ENCODE measurements at regions of chr2 and their contacts with region 1.

Region 1: DNA sequence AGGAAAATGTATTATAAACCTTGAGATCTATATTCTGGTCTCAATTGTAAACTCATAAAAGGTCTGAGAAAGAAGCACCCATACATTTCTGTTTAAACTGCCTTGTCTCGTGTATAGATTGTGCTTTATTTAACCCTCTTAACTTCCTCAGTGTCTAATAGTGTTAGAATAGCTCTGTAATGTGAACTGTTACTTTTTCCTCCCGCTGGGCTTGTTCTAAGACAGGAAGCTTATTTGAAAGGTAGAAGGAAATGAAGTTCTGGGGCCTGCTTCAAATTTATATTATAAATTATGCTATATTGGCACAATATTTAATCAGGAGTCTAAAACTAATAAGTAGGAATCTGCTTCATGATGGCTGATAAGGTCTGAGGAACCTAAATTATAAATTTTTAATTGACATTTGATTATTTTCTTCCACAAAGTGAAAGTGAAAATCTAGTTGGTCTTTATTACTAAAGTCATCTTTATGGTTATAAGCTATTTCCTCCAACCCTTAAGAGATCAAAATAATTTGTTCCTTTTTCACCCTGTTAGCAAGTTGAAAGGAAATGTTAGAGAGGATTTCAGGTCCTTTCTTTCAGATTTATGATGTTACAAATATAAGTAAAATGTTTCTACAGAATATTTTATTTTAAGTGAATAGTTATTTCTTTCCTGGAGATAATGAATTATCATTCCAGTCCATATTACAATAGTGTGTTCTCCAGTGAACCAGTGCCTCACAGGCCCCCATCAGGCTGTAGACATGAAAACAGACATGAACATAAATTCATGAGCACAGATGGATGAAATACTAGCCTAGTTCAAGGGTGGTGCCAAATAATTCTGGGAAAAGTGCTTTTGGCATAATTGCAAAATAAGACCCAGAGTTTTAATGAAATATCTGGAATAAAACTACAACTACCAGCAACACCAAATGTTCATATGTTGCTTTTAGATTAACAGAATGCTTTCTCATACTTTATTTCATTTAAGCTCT is 7.9 kb downstream of the MFSD6 start:
- DNase-seq: peak in 1 of 9 experiments; percentile 43
- ATAC-seq: peak; percentile 62
- H3K4me3 ChIP-seq: peak overlapping the region in 1 of 2 experiments; percentile 6
- H3K4me3 Mint-ChIP-seq: peak overlapping the region; percentile 64
- H3K27ac ChIP-seq: peak overlapping the region; percentile 32 to 76
- H3K27ac Mint-ChIP-seq: peak overlapping the region; percentile 86
- H3K4me1 ChIP-seq: peaks cover 92% of the 10 kb centered on the region
- H3K4me1 Mint-ChIP-seq: peaks cover 89% of the 10 kb centered on the region
- H3K27me3 ChIP-seq: no peaks in the 10 kb centered on the region
- H3K27me3 Mint-ChIP-seq: no peaks in the 10 kb centered on the region
- CTCF ChIP-seq: no peak

Region 2: GRCh38 chr2:190376591-190377245 is 39.4 kb before region 1 on chr2:
- CTCF ChIA-PET with region 1: no interaction called
- POLR2A ChIA-PET with region 1: no interaction called
- intact Hi-C with region 1: no loop called
- DNase-seq: no peak
- ATAC-seq: no peak
- H3K4me3 ChIP-seq: no peak overlapping the region
- H3K4me3 Mint-ChIP-seq: no peak overlapping the region
- H3K27ac ChIP-seq: no peak overlapping the region
- H3K27ac Mint-ChIP-seq: no peak overlapping the region
- H3K4me1 ChIP-seq: no peaks in the 10 kb centered on the region
- H3K4me1 Mint-ChIP-seq: no peaks in the 10 kb centered on the region
- H3K27me3 ChIP-seq: peaks cover 0 to 2% of the 10 kb centered on the region in 2 experiments
- H3K27me3 Mint-ChIP-seq: no peaks in the 10 kb centered on the region
- CTCF ChIP-seq: no peak

Region 3: DNA sequence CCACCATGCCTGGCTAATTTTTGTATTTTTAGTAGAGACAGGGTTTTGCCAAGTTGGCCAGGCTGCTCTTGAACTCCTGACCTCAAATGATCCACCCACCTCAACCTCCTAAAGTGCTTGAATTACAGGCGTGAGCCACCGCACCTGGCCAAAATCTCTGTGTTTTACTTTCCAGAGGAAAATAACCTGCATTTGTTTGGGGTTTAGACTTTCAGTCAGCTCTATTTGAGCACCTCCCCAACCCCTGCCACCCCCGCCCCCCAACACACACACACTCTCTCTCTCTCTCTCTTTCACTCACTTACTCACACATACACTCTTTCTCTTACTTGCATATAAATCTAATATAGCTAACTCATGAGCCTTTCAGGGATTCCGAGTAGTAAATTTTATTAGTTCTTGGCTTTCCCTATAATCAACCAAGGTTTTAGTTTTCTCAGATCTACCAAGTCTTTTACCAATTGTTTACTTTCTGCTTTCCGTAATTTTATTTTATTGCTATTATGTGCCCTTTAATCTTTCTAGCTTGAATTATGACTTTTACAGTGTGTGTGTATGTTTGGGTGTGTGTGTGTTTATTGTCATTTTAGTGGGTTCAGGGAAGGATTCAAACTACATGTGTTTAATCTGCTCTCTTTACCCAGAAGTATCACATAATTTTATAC is 16.6 kb after region 1 on chr2:
- CTCF ChIA-PET with region 1: no interaction called
- POLR2A ChIA-PET with region 1: no interaction called
- intact Hi-C with region 1: loop called (anchors 1 to 2 kb)
- DNase-seq: no peak
- ATAC-seq: no peak
- H3K4me3 ChIP-seq: no peak overlapping the region
- H3K4me3 Mint-ChIP-seq: no peak overlapping the region
- H3K27ac ChIP-seq: no peak overlapping the region
- H3K27ac Mint-ChIP-seq: peak overlapping the region; percentile 16
- H3K4me1 ChIP-seq: peaks cover 23% of the 10 kb centered on the region
- H3K4me1 Mint-ChIP-seq: peaks cover 69% of the 10 kb centered on the region
- H3K27me3 ChIP-seq: no peaks in the 10 kb centered on the region
- H3K27me3 Mint-ChIP-seq: no peaks in the 10 kb centered on the region
- CTCF ChIP-seq: no peak

Region 4: GRCh38 chr2:190468814-190469569 is 52.9 kb after region 1 on chr2:
- CTCF ChIA-PET with region 1: no interaction called
- POLR2A ChIA-PET with region 1: no interaction called
- intact Hi-C with region 1: loop called in 1 of 2 experiments (anchors 10 kb)
- DNase-seq: no peak
- ATAC-seq: no peak
- H3K4me3 ChIP-seq: no peak overlapping the region
- H3K4me3 Mint-ChIP-seq: no peak overlapping the region
- H3K27ac ChIP-seq: no peak overlapping the region
- H3K27ac Mint-ChIP-seq: peak overlapping the region; percentile 46
- H3K4me1 ChIP-seq: peaks cover 37% of the 10 kb centered on the region
- H3K4me1 Mint-ChIP-seq: peaks cover 62% of the 10 kb centered on the region
- H3K27me3 ChIP-seq: no peaks in the 10 kb centered on the region
- H3K27me3 Mint-ChIP-seq: no peaks in the 10 kb centered on the region
- CTCF ChIP-seq: no peak

Region 5: DNA sequence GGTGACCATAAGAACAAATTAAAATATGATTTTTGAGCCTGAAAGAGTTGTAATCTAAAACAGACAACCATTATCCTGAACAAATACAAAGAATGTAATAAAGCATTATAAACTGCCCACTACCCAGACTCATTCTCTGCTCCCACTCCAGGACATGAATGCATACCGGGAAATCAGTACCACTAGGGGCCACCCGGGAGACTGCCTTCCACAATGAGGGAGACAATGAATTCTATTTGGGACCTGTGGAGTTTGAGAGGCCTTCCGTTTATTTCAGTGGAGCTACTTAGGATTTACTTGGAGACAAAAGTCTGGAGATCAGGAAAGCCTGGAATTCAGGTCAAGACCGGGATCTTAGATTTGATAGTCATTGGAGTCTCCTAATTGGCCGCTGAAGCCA is 282.8 kb after region 1 on chr2:
- CTCF ChIA-PET with region 1: no interaction called
- POLR2A ChIA-PET with region 1: no interaction called
- intact Hi-C with region 1: no loop called
- DNase-seq: no peak
- ATAC-seq: no peak
- H3K4me3 ChIP-seq: no peak overlapping the region
- H3K4me3 Mint-ChIP-seq: no peak overlapping the region
- H3K27ac ChIP-seq: no peak overlapping the region
- H3K27ac Mint-ChIP-seq: no peak overlapping the region
- H3K4me1 ChIP-seq: no peaks in the 10 kb centered on the region
- H3K4me1 Mint-ChIP-seq: peaks cover 6% of the 10 kb centered on the region
- H3K27me3 ChIP-seq: no peaks in the 10 kb centered on the region
- H3K27me3 Mint-ChIP-seq: no peaks in the 10 kb centered on the region
- CTCF ChIP-seq: no peak

Region 6: GRCh38 chr2:191304939-191305875 is 889.1 kb after region 1 on chr2:
- CTCF ChIA-PET with region 1: no interaction called
- POLR2A ChIA-PET with region 1: no interaction called
- intact Hi-C with region 1: no loop called
- DNase-seq: no peak
- ATAC-seq: no peak
- H3K4me3 ChIP-seq: no peak overlapping the region
- H3K4me3 Mint-ChIP-seq: no peak overlapping the region
- H3K27ac ChIP-seq: no peak overlapping the region
- H3K27ac Mint-ChIP-seq: no peak overlapping the region
- H3K4me1 ChIP-seq: no peaks in the 10 kb centered on the region
- H3K4me1 Mint-ChIP-seq: no peaks in the 10 kb centered on the region
- H3K27me3 ChIP-seq: no peaks in the 10 kb centered on the region
- H3K27me3 Mint-ChIP-seq: peaks cover 6% of the 10 kb centered on the region
- CTCF ChIP-seq: no peak

Measured in CD8-positive, alpha-beta T cell (primary cell).